ENCODE measurements at regions of chr10 and their contacts with region 1.

Region 1: DNA sequence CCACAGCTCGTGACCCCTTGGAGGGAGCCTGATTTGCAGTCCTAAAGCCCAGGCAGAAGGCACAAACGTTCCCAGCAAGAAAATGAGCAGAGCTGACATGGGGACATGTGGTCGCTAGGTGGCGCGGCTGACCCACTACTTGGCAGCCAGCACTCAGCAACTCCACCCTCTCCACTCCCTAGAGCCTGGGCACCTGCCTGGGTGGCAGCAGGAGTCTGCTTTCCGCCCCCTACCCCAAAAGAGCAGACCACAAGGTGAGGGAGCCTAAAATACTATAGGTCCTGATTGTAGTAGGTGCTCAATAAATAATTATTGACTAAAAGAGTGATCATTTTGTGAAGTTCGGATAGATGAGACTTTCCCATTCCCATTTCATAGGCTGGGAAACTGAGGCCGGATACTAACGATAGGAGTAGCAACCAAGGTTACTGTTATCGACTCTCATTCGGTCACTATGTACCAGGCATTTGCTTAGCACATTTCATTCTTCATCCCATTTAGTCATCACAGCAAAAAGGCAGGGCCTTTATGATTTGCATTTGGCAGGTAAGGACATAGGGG is 57.4 kb downstream of the NEUROG3 start:
- DNase-seq: peak; percentile 65 to 82 (median 76)
- ATAC-seq: peak; percentile 92
- H3K4me3 ChIP-seq: no peak overlapping the region
- H3K4me3 Mint-ChIP-seq: no peak overlapping the region
- H3K27ac ChIP-seq: no peak overlapping the region
- H3K27ac Mint-ChIP-seq: no peak overlapping the region
- H3K4me1 ChIP-seq: no peaks in the 10 kb centered on the region
- H3K4me1 Mint-ChIP-seq: no peaks in the 10 kb centered on the region
- H3K27me3 ChIP-seq: no peaks in the 10 kb centered on the region
- H3K27me3 Mint-ChIP-seq: peaks cover 5 to 36% (median 12%) of the 10 kb centered on the region in 5 donors

Region 2: DNA sequence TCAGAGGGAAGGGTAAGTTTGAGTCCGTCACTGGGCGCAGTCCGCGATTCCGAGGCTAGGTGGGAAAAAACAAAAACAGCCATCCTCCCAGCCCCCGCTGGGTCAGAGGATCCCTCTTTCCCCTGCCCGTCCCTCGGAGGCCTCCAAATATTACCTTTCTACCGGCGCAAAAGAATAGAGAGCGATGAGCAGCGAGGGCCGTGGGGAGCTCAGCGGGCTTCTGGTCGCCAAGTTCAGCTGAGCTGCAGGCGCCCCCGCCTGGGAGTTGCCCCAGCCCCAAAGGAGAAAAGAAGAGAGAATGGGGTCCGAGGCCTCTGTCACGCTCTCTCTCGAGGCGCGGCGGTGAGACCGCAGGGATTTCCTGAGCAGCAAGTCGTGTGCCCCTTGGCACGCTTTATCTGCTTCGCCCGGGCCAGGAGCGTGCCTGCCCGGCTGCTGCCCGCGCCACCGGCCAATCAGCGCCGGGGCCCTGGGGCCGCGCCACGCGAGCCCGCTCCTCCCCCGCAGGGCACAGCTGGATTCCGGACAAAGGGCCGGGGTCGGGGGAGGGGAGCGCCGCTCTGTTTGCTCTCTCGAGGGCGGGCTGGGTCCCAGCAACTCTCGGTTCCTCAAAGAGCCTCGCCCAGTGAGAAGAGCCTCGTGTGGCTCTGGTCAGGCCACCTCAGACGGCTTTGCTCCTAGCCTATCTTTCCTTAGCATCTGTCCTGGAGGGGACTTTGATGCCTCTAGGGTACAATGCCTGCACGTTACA is 57.5 kb after region 1 on chr10 and contains the start of gene NEUROG3:
- CTCF ChIA-PET with region 1: interaction called, 3 read pairs
- POLR2A ChIA-PET with region 1: no interaction called
- intact Hi-C with region 1: loop called in 1 of 2 experiments (anchors 5 kb)
- DNase-seq: no peak
- ATAC-seq: peak; percentile 44
- H3K4me3 ChIP-seq: peak within 1 kb of the TSS; percentile 47
- H3K4me3 Mint-ChIP-seq: peak within 1 kb of the TSS; percentile 69 to 87 (median 82)
- H3K27ac ChIP-seq: no peak within 1 kb of the TSS
- H3K27ac Mint-ChIP-seq: no peak within 1 kb of the TSS
- H3K4me1 ChIP-seq: peaks cover 9 to 13% of the 10 kb centered on the region in 2 donors
- H3K4me1 Mint-ChIP-seq: peaks cover 15 to 41% (median 28%) of the 10 kb centered on the region in 7 donors
- H3K27me3 ChIP-seq: peaks cover 4 to 29% of the 10 kb centered on the region in 2 donors
- H3K27me3 Mint-ChIP-seq: peaks cover 74 to 92% (median 80%) of the 10 kb centered on the region in 5 donors
- total RNA-seq, gene NEUROG3: 0.24 TPM in 1 of 5 experiments, not detected in the others

Region 3: GRCh38 chr10:69716711-69717560 is 201.2 kb after region 1 on chr10:
- CTCF ChIA-PET with region 1: interaction called, 4 read pairs
- POLR2A ChIA-PET with region 1: no interaction called
- intact Hi-C with region 1: loop called (anchors 1 kb)
- DNase-seq: peak in 7 of 9 donors; percentile 20 to 65 (median 33)
- ATAC-seq: peak; percentile 50
- H3K4me3 ChIP-seq: no peak overlapping the region
- H3K4me3 Mint-ChIP-seq: no peak overlapping the region
- H3K27ac ChIP-seq: no peak overlapping the region
- H3K27ac Mint-ChIP-seq: no peak overlapping the region
- H3K4me1 ChIP-seq: no peaks in the 10 kb centered on the region
- H3K4me1 Mint-ChIP-seq: no peaks in the 10 kb centered on the region
- H3K27me3 ChIP-seq: no peaks in the 10 kb centered on the region
- H3K27me3 Mint-ChIP-seq: peaks cover 0 to 18% (median 10%) of the 10 kb centered on the region in 5 donors

Region 4: DNA sequence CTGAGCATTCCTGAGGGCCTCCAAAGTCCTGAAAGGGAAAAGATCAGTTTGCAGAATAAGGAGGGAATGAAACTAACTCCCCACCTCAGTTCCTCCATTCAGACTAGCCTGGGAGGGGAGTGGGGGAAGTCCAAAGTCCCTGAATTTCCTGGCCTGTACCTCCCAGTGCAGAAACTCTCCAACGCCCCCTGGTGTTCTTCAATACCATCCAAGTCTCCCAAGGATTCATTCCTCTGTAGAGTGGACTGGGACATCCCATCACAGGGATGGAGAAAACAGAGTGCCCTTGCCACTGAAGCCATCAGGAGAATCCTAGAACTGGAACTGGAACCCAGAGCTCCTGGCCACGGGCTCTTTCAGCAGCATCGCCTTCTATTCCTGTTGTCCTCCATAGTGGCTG is 284.3 kb after region 1 on chr10:
- CTCF ChIA-PET with region 1: no interaction called
- POLR2A ChIA-PET with region 1: no interaction called
- intact Hi-C with region 1: loop called in 1 of 2 experiments (anchors 2 kb)
- DNase-seq: no peak
- ATAC-seq: no peak
- H3K4me3 ChIP-seq: no peak overlapping the region
- H3K4me3 Mint-ChIP-seq: peak overlapping the region in 1 of 10 donors; percentile 44
- H3K27ac ChIP-seq: no peak overlapping the region
- H3K27ac Mint-ChIP-seq: no peak overlapping the region
- H3K4me1 ChIP-seq: no peaks in the 10 kb centered on the region
- H3K4me1 Mint-ChIP-seq: peaks cover 3 to 15% (median 12%) of the 10 kb centered on the region in 7 donors
- H3K27me3 ChIP-seq: no peaks in the 10 kb centered on the region
- H3K27me3 Mint-ChIP-seq: peaks cover 46 to 61% (median 55%) of the 10 kb centered on the region in 5 donors

Measured in naive thymus-derived CD4-positive, alpha-beta T cell (primary cell).